Posterior vena cava (tissue), 2 donors: ENCODE measurements at regions of chr16 and their contacts with region 1.

Region 1: DNA sequence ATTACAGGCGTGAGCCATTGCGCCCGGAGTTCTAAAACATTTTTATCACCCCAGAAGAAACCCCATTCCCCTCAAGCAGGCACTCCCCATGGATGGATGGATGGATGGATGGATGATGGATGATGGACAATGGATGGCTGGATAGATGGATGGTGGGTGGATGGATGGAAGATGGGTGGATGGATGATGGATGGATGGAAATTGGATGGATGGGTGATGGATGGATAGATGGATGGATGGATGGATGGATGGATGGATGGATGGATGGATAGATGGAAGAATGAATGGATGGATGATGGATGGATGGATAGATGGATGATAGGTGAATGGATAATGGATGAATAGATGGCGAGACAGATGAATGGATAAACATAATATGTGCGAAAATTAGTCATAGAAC is 16.5 kb downstream of the PLA2G10 start:
- DNase-seq: peak; percentile 25

Region 2: DNA sequence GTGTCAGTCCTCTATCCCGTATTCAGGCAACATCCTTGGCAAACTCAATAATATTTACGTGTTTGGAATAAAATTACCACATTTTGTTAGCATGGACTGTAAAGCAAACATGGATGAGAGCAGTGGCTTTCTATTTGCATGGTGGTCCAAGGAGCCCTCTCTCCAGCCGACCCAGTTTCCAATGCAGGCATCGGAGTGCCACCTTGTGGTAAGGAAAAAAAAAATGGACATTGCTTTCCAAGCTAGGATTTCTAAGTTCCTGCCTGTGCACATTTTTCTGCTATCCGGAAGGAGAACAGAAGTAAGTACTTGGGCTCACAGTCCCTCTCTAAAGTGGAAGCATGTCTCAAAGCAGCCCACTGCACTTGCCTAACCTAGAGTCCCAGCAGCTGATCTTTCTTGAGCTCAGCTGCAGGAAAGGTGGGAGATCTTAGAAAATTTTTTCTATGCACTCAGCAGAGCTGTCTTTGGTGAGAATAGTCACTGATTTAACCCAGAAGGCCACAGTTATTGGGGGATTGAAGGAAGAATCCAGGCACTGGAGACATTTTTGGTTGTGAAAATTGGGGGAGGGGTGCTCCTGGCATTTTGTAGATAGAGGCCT is 803.7 kb before region 1 on chr16:
- intact Hi-C with region 1: no loop called
- DNase-seq: no peak

Region 3: DNA sequence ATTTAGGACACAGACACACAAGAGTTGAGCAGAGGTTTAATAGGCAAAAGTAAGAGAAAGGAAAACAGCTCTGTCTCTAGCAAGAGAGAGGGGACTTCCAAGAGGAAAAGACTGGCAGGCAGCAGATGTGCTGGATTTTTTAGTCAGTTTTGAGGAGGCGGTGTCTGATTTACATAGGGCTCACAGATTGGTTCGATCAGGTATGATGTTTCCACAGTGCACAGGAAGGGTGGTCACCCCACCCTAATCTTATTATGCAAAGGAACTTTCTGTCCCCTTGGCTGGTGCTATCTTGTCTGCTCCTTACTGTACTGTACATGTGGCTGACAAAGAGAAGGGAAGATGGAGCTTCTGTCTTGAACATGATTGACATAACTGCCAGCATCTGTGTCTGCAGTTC is 19.6 kb before region 1 on chr16:
- intact Hi-C with region 1: loop called in 1 of 2 experiments (anchors 1 kb)
- DNase-seq: peak; percentile 8